Activated T-helper 2 cell treated with anti-CD3 and anti-CD28 coated beads, Interferon-gamma antibody, Interleukin-2, Interleukin-4, amounts not matched to agents 10 μg/mL and 5 μg/mL and 100 μg/mL, durations not matched to agents 14 hours and 24 hours and 36 hours (primary cell): ENCODE measurements at regions of chr5 and their contacts with region 1.

Region 1: DNA sequence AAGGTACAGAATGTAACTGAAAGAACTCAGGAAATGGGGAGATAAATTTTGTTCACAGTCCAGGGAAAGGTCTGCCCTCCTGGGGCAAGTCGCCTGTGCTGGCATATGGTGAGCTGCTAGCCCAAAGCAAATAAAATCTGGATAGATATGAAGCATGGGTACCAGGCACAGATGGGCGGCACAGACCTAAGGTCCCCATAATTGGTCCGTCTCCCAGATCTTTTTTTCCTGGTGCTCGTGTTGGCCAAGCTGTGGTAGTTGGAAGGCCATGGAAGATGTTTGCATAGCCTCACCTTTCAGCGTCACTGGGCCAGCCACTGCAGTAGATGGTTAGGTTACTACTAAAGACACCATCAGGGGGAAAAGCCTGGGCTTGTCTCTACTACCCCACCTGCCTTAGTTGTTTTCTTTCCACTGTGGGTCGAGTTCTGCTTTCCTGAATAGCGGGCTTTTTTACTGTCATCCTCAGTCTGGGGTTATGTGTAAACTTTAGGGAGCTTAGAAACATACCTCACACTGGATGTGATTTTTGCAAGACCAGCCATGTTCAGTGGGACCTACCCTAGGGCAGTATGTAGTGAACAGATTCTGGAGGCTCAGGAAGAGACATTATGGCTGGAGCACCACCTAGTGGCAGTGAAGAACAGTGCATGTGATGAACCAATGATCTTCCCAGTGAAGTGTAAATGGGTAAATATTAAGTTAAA is 24.2 kb upstream of the GLRX start:
- DNase-seq: peak; percentile 47
- H3K4me3 Mint-ChIP-seq: no peak overlapping the region
- H3K27ac Mint-ChIP-seq: no peak overlapping the region
- H3K4me1 Mint-ChIP-seq: peaks cover 26% of the 10 kb centered on the region
- H3K27me3 Mint-ChIP-seq: peaks cover 6% of the 10 kb centered on the region

Region 2: GRCh38 chr5:94968507-94969095 is 878.1 kb before region 1 on chr5:
- intact Hi-C with region 1: loop called (anchors 5 kb)
- DNase-seq: no peak
- H3K4me3 Mint-ChIP-seq: no peak overlapping the region
- H3K27ac Mint-ChIP-seq: no peak overlapping the region
- H3K4me1 Mint-ChIP-seq: no peaks in the 10 kb centered on the region
- H3K27me3 Mint-ChIP-seq: no peaks in the 10 kb centered on the region

Region 3: GRCh38 chr5:95718203-95718602 is 128.5 kb before region 1 on chr5:
- intact Hi-C with region 1: loop called (anchors 2 kb)
- DNase-seq: peak; percentile 21
- H3K4me3 Mint-ChIP-seq: no peak overlapping the region
- H3K27ac Mint-ChIP-seq: no peak overlapping the region
- H3K4me1 Mint-ChIP-seq: peaks cover 19% of the 10 kb centered on the region
- H3K27me3 Mint-ChIP-seq: peaks cover 31% of the 10 kb centered on the region

Region 4: DNA sequence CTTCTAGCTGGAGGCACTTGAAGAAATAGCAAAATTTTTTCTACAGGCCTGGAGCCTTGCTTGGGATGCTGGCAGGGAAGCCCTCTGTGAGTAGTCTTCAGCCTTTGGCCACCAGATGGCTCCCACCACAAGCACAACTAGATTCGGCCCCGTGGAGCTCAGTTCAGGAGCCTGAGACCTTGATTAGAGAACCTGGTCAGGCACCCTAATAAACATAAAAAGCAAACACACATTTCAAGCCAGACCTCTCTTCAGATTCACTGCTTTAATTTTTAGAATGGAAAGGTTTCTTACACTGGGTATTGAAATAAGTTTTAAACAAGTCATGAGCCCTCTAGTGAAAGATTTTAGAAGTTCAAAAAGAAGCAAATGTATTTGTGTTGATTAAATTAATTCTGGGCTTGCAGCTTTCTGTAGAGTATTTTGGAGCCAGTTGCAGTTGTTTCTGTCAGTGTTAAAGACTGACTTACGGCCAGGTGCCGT is 65.6 kb before region 1 on chr5:
- intact Hi-C with region 1: loop called (anchors 1 kb)
- DNase-seq: peak; percentile 52
- H3K4me3 Mint-ChIP-seq: peak overlapping the region; percentile 41
- H3K27ac Mint-ChIP-seq: no peak overlapping the region
- H3K4me1 Mint-ChIP-seq: peaks cover 19% of the 10 kb centered on the region
- H3K27me3 Mint-ChIP-seq: peaks cover 7% of the 10 kb centered on the region

Region 5: DNA sequence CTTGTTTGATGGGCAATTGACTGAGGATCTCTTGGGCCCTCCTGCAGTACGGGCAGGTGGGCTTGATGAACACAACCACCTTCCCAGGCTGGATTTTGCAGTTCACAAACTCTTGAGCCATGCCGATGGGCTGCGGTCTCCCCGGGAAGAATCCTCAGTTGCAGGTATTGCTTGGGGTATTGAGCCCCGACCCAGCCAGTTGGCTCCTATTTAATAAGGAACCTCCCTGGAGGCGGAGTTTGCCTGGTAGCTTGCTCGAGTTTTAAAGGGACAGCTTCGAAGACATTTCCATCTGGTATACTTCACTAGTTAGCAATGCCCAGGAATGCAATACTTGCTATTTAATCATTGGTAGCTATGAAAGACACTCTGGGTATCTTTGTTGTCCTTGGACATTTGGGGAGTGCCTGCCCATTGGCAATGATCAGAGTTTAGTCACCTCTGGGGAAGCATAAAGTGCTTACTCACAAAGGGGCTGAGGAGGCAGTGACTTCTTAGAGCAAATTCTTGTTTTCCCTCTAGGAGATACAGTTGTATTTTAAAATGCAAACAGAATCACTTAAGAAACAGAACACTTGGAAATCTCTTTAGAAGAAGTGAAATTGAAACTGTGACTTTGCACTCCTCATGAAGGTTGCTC is 24.0 kb before region 1 on chr5 and contains the start of gene GLRX:
- intact Hi-C with region 1: loop called (anchors 1 kb)
- DNase-seq: peak; percentile 56
- H3K4me3 Mint-ChIP-seq: peak within 1 kb of the TSS; percentile 91
- H3K27ac Mint-ChIP-seq: peak within 1 kb of the TSS; percentile 80
- H3K4me1 Mint-ChIP-seq: peaks cover 55% of the 10 kb centered on the region
- H3K27me3 Mint-ChIP-seq: no peaks in the 10 kb centered on the region
- total RNA-seq, gene GLRX: 14.9 and 18.5 TPM in 2 replicates

Region 6: DNA sequence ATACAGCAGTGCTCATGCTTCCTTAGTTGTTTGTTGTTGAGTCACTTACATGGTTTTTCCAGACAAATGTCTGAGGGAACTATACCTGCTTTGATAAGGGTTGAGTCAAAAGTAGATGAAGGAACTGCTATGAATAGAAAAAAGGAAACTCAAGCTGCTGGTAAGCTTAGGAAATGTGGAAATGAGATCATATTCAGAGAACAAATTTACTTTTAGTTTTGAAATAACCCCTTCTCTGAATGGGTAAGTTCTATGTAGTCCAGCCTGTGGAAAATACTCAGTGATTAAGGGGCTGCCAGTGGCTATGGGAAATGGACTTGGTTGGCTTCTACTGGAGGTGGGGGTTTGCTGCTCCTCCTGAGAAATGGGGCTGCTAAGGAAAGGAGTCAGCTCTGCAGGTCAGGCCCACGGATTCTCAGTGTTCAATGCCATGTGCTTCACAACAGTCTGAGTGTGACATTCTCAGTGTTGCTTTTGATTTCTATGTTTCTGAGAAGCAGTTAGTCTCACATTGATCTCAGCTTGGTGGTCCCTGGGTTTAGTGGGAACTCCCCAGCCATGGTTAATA is 23.5 kb after region 1 on chr5:
- intact Hi-C with region 1: loop called (anchors 2 kb)
- DNase-seq: peak; percentile 28
- H3K4me3 Mint-ChIP-seq: peak overlapping the region; percentile 37
- H3K27ac Mint-ChIP-seq: peak overlapping the region; percentile 89
- H3K4me1 Mint-ChIP-seq: peaks cover 45% of the 10 kb centered on the region
- H3K27me3 Mint-ChIP-seq: peaks cover 4% of the 10 kb centered on the region

Region 7: GRCh38 chr5:95915999-95916686 is 69.4 kb after region 1 on chr5:
- intact Hi-C with region 1: no loop called
- DNase-seq: no peak
- H3K4me3 Mint-ChIP-seq: no peak overlapping the region
- H3K27ac Mint-ChIP-seq: peak overlapping the region; percentile 24
- H3K4me1 Mint-ChIP-seq: peaks cover 39% of the 10 kb centered on the region
- H3K27me3 Mint-ChIP-seq: no peaks in the 10 kb centered on the region